B cell (primary cell): ENCODE measurements at regions of chrX and their contacts with region 1.

Region 1: GRCh38 chrX:120629667-120630537 is at the start of gene C1GALT1C1:
- DNase-seq: peak; percentile 94
- ATAC-seq: peak; percentile 92
- H3K4me3 ChIP-seq: peak within 1 kb of the TSS; percentile 62 to 81 (median 69)
- H3K4me3 Mint-ChIP-seq: peak within 1 kb of the TSS; percentile 95
- H3K27ac ChIP-seq: peak within 1 kb of the TSS; percentile 95 to 96
- H3K27ac Mint-ChIP-seq: peak within 1 kb of the TSS; percentile 97
- H3K4me1 ChIP-seq: peaks cover 12 to 18% of the 10 kb centered on the region in 2 donors
- H3K4me1 Mint-ChIP-seq: peaks cover 14% of the 10 kb centered on the region
- H3K27me3 ChIP-seq: no peaks in the 10 kb centered on the region
- H3K27me3 Mint-ChIP-seq: no peaks in the 10 kb centered on the region
- CTCF ChIP-seq: no peak
- total RNA-seq, gene C1GALT1C1: 11.6 and 13.6 TPM in 2 replicates

Region 2: DNA sequence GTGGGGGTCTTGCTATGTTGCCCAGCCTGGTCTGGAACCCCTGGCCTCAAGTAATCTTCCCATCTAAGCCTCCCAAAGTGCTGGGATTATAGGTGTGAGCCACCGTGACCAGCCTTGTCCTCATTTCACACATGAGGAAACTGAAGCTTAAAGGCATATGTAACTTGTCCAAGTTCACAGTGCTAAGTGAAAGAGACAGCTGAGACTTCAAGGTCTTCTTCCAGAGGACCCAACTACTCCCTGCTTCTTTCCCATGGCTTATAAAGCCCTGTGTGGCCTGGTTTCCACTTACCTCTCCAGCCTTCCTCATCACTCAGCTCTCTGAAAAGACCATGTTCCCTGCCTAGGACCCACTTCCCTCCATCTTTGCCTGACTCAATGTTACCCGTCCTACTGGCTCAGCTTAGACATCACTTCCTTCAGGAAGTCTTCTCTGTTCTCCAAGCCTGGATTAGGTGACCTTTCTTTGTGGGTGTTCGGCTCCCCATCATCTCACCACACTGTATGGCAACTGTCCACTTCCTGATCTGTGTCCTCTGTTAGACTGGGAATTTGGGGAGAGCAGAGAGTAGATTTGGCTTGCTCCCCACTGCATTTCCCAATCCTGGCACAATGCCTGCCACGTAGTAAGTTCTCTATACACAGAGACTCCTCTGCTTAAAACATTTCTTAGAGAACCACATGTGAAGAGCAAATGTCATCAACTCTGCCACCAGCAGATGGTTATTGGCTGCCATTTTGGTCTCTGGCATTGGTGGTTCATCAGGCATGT is 130.4 kb before region 1 on chrX:
- CTCF ChIA-PET with region 1: interaction called, 3 read pairs
- POLR2A ChIA-PET with region 1: no interaction called
- intact Hi-C with region 1: loop called (anchors 10 kb)
- DNase-seq: no peak
- ATAC-seq: no peak
- H3K4me3 ChIP-seq: no peak overlapping the region
- H3K4me3 Mint-ChIP-seq: no peak overlapping the region
- H3K27ac ChIP-seq: no peak overlapping the region
- H3K27ac Mint-ChIP-seq: no peak overlapping the region
- H3K4me1 ChIP-seq: no peaks in the 10 kb centered on the region
- H3K4me1 Mint-ChIP-seq: peaks cover 5% of the 10 kb centered on the region
- H3K27me3 ChIP-seq: no peaks in the 10 kb centered on the region
- H3K27me3 Mint-ChIP-seq: no peaks in the 10 kb centered on the region
- CTCF ChIP-seq: no peak

Region 3: GRCh38 chrX:120603707-120604360 is 26.1 kb before region 1 on chrX and contains the start of gene MCTS1:
- CTCF ChIA-PET with region 1: no interaction called
- POLR2A ChIA-PET with region 1: interaction called, 3 read pairs
- intact Hi-C with region 1: loop called (anchors 1 kb)
- DNase-seq: peak; percentile 88
- ATAC-seq: peak; percentile 93
- H3K4me3 ChIP-seq: peak within 1 kb of the TSS; percentile 68 to 88 (median 70)
- H3K4me3 Mint-ChIP-seq: peak within 1 kb of the TSS; percentile 90
- H3K27ac ChIP-seq: peak within 1 kb of the TSS; percentile 78 to 94
- H3K27ac Mint-ChIP-seq: peak within 1 kb of the TSS; percentile 94
- H3K4me1 ChIP-seq: peaks cover 10% of the 10 kb centered on the region in 2 donors
- H3K4me1 Mint-ChIP-seq: peaks cover 13% of the 10 kb centered on the region
- H3K27me3 ChIP-seq: no peaks in the 10 kb centered on the region
- H3K27me3 Mint-ChIP-seq: no peaks in the 10 kb centered on the region
- CTCF ChIP-seq: no peak
- total RNA-seq, gene MCTS1: 25.5 and 27.9 TPM in 2 replicates

Region 4: GRCh38 chrX:120726294-120726693 is 96.4 kb after region 1 on chrX:
- CTCF ChIA-PET with region 1: no interaction called
- POLR2A ChIA-PET with region 1: no interaction called
- intact Hi-C with region 1: loop called (anchors 10 kb)
- DNase-seq: peak; percentile 71
- ATAC-seq: peak; percentile 95
- H3K4me3 ChIP-seq: no peak overlapping the region
- H3K4me3 Mint-ChIP-seq: peak overlapping the region; percentile 46
- H3K27ac ChIP-seq: peak overlapping the region; percentile 43 to 55
- H3K27ac Mint-ChIP-seq: peak overlapping the region; percentile 59
- H3K4me1 ChIP-seq: peaks cover 22 to 23% of the 10 kb centered on the region in 2 donors
- H3K4me1 Mint-ChIP-seq: peaks cover 27% of the 10 kb centered on the region
- H3K27me3 ChIP-seq: no peaks in the 10 kb centered on the region
- H3K27me3 Mint-ChIP-seq: no peaks in the 10 kb centered on the region
- CTCF ChIP-seq: no peak

Region 5: GRCh38 chrX:120755066-120755846 is 125.4 kb after region 1 on chrX:
- CTCF ChIA-PET with region 1: interaction called, 3 read pairs
- POLR2A ChIA-PET with region 1: no interaction called
- intact Hi-C with region 1: loop called (anchors 1 kb)
- DNase-seq: peak; percentile 82
- ATAC-seq: peak; percentile 79
- H3K4me3 ChIP-seq: peak overlapping the region in 1 of 5 experiments; percentile 13
- H3K4me3 Mint-ChIP-seq: peak overlapping the region; percentile 47
- H3K27ac ChIP-seq: peak overlapping the region; percentile 87 to 88
- H3K27ac Mint-ChIP-seq: peak overlapping the region; percentile 86
- H3K4me1 ChIP-seq: peaks cover 82 to 83% of the 10 kb centered on the region in 2 donors
- H3K4me1 Mint-ChIP-seq: peaks cover 89% of the 10 kb centered on the region
- H3K27me3 ChIP-seq: no peaks in the 10 kb centered on the region
- H3K27me3 Mint-ChIP-seq: no peaks in the 10 kb centered on the region
- CTCF ChIP-seq: no peak